ENCODE measurements at regions of chr17 and their contacts with region 1.

Region 1: DNA sequence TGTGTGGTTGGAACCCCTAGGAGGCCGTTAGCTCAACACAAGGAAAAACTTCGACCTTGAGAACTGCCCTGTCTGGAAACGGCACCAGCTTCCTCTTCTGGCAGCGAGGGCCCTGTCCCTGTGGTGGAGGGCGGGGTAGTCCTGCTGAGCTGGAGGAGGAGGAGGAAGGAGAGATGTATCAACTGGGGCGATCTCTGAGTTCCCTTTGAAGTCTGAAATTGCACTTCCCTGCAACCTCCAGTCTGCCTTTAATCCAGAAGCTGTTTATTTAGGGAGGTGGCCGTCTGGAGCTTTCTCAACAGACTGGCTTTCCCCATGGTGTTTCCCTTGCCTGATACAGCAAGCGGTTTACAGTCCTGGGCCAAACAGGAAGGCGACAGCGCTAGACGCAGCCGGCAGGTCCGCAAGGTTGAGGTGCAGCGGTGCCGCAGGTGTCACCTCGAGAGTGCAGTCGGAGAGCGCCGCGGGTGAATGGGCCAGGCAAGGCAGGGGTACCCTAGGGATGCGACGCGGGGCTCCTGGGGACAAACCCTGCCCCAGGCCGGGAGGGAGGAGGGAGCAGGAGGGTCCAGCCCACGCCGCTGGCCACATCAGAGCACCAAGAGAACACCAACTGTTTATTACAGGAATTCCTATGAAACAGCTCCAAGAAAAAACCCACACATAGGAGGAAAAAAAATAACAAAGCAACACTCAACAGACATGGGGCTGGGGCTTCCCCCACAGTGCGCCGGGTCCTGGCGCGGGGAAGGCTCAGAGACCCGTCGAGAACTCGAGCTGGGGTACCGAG is 11.4 kb upstream of the MRPS23 start:
- DNase-seq: peak in 1 of 10 donors; percentile 27
- H3K4me3 ChIP-seq: peak overlapping the region; percentile 4 to 67 (median 55)
- H3K27ac ChIP-seq: peak overlapping the region in 55 of 59 donors; percentile 4 to 87 (median 77)
- H3K27me3 ChIP-seq: no peaks in the 10 kb centered on the region
- CTCF ChIP-seq: peak in 1 of 56 donors; percentile 6

Region 2: GRCh38 chr17:57875309-57876115 is 14.3 kb after region 1 on chr17:
- intact Hi-C with region 1: loop called in 1 of 2 experiments (anchors 2 kb)
- DNase-seq: peak; percentile 34 to 85 (median 82)
- H3K4me3 ChIP-seq: peak overlapping the region in 21 of 59 donors; percentile 3 to 57 (median 43)
- H3K27ac ChIP-seq: peak overlapping the region; percentile 63 to 99 (median 94)
- H3K27me3 ChIP-seq: no peaks in the 10 kb centered on the region
- CTCF ChIP-seq: peak in 26 of 56 donors; percentile 7 to 45 (median 20)

Region 3: DNA sequence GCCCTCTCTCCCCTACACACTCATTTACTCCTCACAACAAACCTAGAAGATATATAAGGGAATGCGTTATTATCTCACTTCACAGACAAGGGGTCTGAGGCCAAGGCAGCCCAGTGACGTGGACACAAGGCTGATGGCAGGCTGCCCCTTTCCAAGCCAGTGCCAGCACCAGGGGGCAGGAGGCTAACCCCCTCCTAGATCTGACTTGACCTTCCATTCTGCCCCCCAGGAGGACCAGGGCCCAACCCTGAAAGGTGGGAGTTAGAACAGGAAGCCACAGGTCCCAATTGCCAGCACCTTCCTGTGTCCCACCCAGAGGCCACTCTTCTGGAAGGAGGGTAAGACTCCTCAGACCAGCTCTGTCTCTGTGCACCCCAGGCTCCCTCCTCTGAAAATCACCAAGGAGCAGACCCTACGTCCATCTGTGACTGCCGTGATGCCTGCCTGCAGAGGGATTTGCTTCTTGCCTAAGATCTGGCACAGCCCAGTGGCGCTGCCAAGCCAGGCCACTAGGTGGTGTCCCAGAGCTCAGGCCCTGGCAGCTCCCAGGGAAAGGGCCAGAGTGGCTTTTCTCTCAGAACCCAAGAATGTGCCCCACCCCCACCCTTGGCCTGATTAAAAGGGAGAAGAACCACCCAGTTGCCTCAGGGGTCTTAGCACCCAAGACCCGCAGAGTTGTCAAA is 31.1 kb after region 1 on chr17:
- intact Hi-C with region 1: loop called in 1 of 2 experiments (anchors 2 kb)
- DNase-seq: peak; percentile 72 to 86 (median 79)
- H3K4me3 ChIP-seq: peak overlapping the region in 18 of 59 donors; percentile 25 to 54 (median 42)
- H3K27ac ChIP-seq: peak overlapping the region; percentile 72 to 100 (median 95)
- H3K27me3 ChIP-seq: no peaks in the 10 kb centered on the region
- CTCF ChIP-seq: peak; percentile 77 to 98 (median 93)

Region 4: DNA sequence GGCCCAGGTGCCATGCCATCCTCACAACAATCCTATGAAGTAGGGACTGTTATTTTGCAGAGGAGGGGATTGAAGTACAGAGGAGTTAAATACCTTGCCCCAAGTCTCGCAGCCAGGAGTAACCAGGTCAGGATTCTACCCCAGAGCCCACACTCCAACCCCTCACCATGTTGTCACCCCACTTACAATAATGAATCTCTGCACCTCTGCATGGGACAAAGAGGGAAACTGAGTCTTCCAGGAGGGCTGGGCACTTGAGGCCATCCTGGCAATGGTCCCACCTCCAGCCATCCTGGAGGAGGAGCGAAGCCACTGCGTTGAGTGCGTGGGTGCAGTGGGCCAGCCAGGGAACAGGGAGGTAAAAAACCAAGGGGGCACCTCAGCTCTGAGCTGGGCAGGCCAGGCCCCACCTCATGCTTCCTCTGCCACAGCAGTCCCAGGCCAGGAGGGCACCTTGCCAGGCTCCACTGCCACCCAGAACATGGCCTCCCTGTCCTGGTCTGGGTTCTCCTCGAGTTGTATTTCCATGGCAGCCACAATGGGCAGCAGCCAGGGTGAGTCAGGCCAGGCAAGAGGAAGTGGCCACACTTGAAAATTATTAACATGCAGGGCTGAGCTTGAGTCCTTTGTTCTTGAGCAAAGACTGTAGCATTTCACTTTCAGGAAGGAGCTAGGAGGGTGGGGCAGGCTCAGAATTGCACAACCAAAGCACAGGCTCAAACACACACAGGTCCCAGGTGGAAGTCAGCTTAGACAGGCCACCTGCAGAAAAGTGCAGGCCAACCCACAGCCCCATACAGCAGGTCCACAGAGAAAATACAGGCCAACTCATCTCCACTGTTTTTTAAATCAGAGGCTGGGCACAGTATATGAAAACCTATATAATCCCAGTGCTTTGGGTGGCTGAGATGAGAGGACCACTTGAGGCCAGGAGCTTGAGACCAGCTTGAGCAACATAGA is 41.9 kb after region 1 on chr17:
- intact Hi-C with region 1: loop called in 1 of 2 experiments (anchors 5 kb)
- DNase-seq: peak in 9 of 10 donors; percentile 50 to 83 (median 78)
- H3K4me3 ChIP-seq: no peak overlapping the region
- H3K27ac ChIP-seq: peak overlapping the region in 58 of 59 donors; percentile 25 to 100 (median 86)
- H3K27me3 ChIP-seq: no peaks in the 10 kb centered on the region
- CTCF ChIP-seq: peak in 3 of 56 donors; percentile 9 to 23 (median 14)

Region 5: GRCh38 chr17:57939797-57940196 is 78.6 kb after region 1 on chr17:
- intact Hi-C with region 1: no loop called
- DNase-seq: no peak
- H3K4me3 ChIP-seq: no peak overlapping the region
- H3K27ac ChIP-seq: peak overlapping the region; percentile 58 to 100 (median 99)
- H3K27me3 ChIP-seq: no peaks in the 10 kb centered on the region
- CTCF ChIP-seq: no peak

Region 6: DNA sequence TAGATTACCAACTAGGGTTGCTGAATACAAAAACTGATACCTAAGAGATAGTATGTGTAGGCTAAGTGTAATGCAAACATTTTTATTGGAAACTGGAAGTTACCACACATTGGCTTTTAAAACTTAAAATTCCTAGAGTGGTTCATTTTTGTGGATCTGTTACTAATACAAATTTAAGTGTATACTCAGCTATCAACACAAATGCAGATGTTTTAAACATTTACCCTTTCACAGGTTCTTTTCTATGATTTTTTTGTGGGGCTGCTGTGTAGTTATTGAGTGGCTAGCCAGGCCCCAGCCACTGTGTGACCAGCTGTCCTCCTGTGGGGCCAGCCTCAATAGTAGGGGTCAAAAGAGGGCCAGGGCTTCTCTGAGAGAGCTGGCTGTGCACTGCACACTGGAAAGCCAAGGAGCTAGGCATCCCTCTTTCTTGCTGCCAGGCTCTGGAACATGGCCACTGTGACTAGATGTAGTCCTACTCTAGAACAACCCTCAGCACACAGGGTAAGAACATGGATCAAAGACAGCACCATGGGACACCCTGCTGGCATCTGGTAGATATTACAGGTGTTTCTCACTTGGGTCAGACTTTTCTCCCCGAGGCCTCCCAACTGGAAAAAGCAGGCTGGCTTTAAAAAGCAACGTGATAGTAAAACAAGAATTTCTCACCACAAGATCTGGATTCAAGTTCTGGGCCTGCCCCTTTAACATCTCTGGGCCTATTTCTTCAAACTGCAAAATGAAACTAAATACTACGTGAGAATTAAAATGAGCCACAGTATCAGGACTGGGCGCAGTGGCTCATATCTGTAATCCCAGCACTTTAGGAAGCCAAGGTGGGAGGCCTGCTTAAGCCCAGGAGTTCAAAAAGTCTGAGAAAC is 134.1 kb after region 1 on chr17:
- intact Hi-C with region 1: loop called (anchors 1 to 2 kb)
- DNase-seq: peak in 9 of 10 donors; percentile 9 to 77 (median 61)
- H3K4me3 ChIP-seq: peak overlapping the region in 1 of 59 donors; percentile 21
- H3K27ac ChIP-seq: peak overlapping the region in 57 of 59 donors; percentile 11 to 92 (median 75)
- H3K27me3 ChIP-seq: no peaks in the 10 kb centered on the region
- CTCF ChIP-seq: peak; percentile 37 to 87 (median 72)

Region 7: DNA sequence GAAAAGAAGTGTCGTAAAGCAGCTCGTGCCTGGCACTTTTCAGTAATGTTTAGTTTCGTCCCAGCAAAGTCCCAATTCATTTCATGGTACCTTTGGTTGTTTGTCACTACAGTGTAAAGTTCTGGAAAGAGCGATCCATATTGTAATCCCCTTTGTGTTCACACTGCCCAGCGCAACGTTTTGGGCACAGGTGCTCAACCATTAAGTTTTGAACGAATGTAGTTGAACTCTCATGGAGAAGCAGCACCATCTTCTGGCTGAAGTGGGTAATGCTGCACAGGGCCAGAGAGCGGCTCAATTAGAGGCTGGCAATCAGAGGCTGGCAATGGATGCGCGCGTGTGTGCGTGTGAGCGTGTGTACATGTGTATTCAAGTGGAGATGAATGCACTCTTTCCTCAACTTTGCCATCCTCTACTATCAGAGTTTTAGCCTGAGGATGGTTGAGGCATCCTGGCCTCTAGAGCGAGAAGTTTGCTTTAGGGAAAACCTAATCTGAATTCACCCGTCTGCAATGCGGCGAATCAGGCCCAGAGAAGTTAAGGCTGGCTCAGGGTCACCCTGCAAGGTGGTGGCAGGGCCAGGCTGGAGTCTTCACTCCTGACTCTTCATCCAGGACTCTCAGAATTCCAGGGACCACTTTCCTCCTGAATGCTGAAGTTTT is 251.9 kb after region 1 on chr17:
- intact Hi-C with region 1: loop called (anchors 2 to 5 kb)
- DNase-seq: peak; percentile 67 to 90 (median 79)
- H3K4me3 ChIP-seq: peak overlapping the region in 3 of 59 donors; percentile 9 to 27 (median 22)
- H3K27ac ChIP-seq: no peak overlapping the region
- H3K27me3 ChIP-seq: peaks cover 0 to 4% (median 0%) of the 10 kb centered on the region in 45 donors
- CTCF ChIP-seq: peak; percentile 78 to 98 (median 94)

Measured in dorsolateral prefrontal cortex (tissue), 120 donors.